GM12878 (cell line): ENCODE measurements at regions of chr3 and their contacts with region 1.

Region 1: GRCh38 chr3:4722103-4722502 is 229.0 kb downstream of the ITPR1 start:
- DNase-seq: no peak
- ATAC-seq: peak; percentile 87
- H3K4me3 ChIP-seq: no peak overlapping the region
- H3K27ac ChIP-seq: no peak overlapping the region
- H3K4me1 ChIP-seq: no peaks in the 10 kb centered on the region
- H3K27me3 ChIP-seq: no peaks in the 10 kb centered on the region
- CTCF ChIP-seq: peak; percentile 30 to 56 (median 47); a peak in 5 of 6 replicates
- EP300 ChIP-seq: no peak
- POLR2A ChIP-seq: no peak
- RAD21 ChIP-seq: peak; percentile 85

Region 2: DNA sequence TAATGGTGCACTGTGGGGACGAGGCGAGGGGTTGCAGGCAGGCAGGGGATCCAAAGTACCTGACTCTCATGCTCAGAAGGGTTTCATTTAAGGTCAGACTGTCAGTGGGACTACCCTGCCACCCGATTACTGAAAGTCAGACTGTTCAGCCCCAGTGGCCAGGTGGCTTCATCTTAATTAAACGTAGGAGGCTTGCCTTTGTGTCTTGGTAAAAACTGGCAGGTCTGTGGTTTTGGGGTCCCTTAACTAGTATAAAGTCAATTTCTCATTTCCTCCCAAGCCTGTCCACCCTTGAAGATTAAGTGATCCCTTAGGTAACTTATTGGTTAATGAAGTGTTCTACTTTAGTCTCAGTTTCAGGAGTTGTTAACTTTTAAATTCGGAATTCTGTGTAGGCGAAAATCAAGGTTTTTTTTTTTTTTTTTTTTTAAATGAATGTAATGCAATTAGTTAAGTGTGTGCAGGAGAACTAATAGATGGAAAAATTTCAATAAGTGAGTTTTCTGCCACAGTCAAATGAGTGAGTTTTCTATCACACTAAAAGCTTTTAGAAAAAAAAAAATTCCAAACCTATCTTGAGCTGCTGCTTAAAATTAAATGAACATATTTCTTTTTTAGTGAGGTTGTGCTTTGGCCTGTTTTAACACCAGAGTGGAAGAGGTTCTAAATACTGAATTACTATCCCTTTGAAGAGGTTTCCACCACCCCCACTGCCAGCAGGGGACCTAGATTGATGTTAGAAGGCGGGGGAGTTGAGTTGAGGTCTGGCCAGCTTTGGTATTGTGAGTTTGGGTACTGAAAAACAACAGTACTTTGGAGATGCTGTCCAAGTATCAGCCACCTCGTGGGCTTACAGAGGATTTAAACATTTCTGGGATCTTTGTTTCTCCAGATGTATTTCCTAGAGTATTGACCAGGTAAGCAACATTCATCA is 213.8 kb before region 1 on chr3:
- CTCF ChIA-PET with region 1: no interaction called
- POLR2A ChIA-PET with region 1: no interaction called
- RAD21 ChIA-PET with region 1: no interaction called
- SMC1A ChIA-PET with region 1: no interaction called
- in situ Hi-C with region 1: no loop called
- intact Hi-C with region 1: no loop called
- DNase-seq: peak; percentile 95
- ATAC-seq: peak; percentile 85
- H3K4me3 ChIP-seq: peak overlapping the region; percentile 37
- H3K27ac ChIP-seq: peak overlapping the region; percentile 60
- H3K4me1 ChIP-seq: peaks cover 48% of the 10 kb centered on the region
- H3K27me3 ChIP-seq: no peaks in the 10 kb centered on the region
- CTCF ChIP-seq: no peak
- EP300 ChIP-seq: peak; percentile 94 to 96
- POLR2A ChIP-seq: no peak
- RAD21 ChIP-seq: no peak

Region 3: GRCh38 chr3:4687167-4687566 is 34.9 kb before region 1 on chr3:
- CTCF ChIA-PET with region 1: no interaction called
- POLR2A ChIA-PET with region 1: no interaction called
- RAD21 ChIA-PET with region 1: no interaction called
- SMC1A ChIA-PET with region 1: no interaction called
- in situ Hi-C with region 1: no loop called
- intact Hi-C with region 1: no loop called
- DNase-seq: no peak
- ATAC-seq: no peak
- H3K4me3 ChIP-seq: no peak overlapping the region
- H3K27ac ChIP-seq: no peak overlapping the region
- H3K4me1 ChIP-seq: no peaks in the 10 kb centered on the region
- H3K27me3 ChIP-seq: no peaks in the 10 kb centered on the region
- CTCF ChIP-seq: no peak
- EP300 ChIP-seq: no peak
- POLR2A ChIP-seq: no peak
- RAD21 ChIP-seq: no peak

Region 4: DNA sequence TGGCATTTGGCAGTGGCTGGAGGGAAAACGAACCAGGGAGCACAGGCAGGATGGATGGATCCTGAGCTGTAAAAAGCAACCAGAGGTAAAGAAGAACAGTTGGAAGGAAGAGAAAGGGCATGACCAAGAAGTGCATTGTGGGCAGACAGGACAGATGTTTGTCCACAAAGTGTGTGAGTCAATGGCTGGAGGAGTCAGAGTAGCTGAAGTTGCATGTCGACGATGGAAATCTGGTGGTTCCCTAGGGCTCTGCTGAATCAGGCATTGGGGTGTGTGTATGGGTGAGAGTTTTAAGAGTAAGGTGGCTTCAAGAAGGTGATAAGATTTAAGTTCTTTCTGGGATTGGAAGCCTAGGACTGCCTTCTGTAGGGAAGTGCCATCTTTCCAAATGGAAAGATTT is 43.1 kb after region 1 on chr3:
- CTCF ChIA-PET with region 1: interaction called, 5 read pairs
- POLR2A ChIA-PET with region 1: no interaction called
- RAD21 ChIA-PET with region 1: interaction called, 264 read pairs
- SMC1A ChIA-PET with region 1: interaction called, 429 read pairs
- in situ Hi-C with region 1: no loop called
- intact Hi-C with region 1: no loop called
- DNase-seq: no peak
- ATAC-seq: no peak
- H3K4me3 ChIP-seq: no peak overlapping the region
- H3K27ac ChIP-seq: no peak overlapping the region
- H3K4me1 ChIP-seq: no peaks in the 10 kb centered on the region
- H3K27me3 ChIP-seq: no peaks in the 10 kb centered on the region
- CTCF ChIP-seq: no peak
- EP300 ChIP-seq: no peak
- POLR2A ChIP-seq: no peak
- RAD21 ChIP-seq: no peak

Region 5: GRCh38 chr3:4807381-4808280 is 85.5 kb after region 1 on chr3:
- CTCF ChIA-PET with region 1: interaction called, 24 read pairs
- POLR2A ChIA-PET with region 1: no interaction called
- RAD21 ChIA-PET with region 1: interaction called, 4 read pairs
- SMC1A ChIA-PET with region 1: interaction called, 4 read pairs
- in situ Hi-C with region 1: no loop called
- intact Hi-C with region 1: no loop called
- DNase-seq: no peak
- ATAC-seq: no peak
- H3K4me3 ChIP-seq: no peak overlapping the region
- H3K27ac ChIP-seq: no peak overlapping the region
- H3K4me1 ChIP-seq: no peaks in the 10 kb centered on the region
- H3K27me3 ChIP-seq: no peaks in the 10 kb centered on the region
- CTCF ChIP-seq: no peak
- EP300 ChIP-seq: no peak
- POLR2A ChIP-seq: no peak
- RAD21 ChIP-seq: no peak

Region 6: DNA sequence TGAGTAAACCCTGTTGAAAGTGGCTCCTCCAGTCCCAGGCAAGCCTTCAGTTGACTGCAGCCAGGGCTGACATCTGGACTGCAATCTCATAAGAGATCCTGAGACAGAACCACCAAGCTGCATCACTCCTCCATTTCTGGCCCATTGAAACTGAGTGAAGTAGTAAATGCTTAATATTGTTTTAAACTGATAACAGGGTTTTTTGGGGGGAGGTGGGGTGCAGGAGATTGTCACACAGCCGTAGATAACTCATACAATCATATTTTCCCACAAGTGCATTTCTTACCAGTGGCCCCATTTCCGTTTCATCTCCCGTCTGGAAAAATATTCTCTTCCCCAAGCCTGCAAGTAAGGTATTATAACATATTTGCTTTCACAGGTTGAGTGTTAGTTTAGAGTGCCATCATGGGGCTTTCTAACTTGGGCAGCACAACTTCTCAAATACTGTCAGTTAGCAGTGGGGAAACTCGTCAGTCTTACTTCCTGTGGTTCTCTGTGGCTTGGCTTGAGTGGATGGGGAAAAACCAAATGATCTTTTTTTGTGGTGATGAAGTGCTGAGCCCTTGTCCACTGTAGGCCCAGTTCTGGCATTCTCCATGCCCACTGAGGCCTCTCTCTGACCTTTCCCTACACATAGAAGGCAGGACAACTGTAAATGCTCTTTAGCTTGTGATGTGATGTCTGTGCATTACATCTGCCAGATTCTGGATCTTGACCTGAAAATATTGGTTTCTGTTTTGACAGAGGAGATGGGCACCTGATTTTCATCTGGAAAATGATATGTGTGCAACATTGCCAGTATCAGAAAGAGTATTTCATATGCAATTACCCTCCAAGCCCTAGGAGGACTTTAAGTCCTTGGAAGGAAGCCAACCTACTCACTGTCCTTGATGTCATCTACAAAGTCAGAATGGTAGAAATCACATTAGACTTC is 167.1 kb after region 1 on chr3:
- CTCF ChIA-PET with region 1: interaction called, 11 read pairs
- POLR2A ChIA-PET with region 1: interaction called, 4 read pairs
- RAD21 ChIA-PET with region 1: interaction called, 4 read pairs
- SMC1A ChIA-PET with region 1: interaction called, 18 read pairs
- in situ Hi-C with region 1: no loop called
- intact Hi-C with region 1: no loop called
- DNase-seq: peak; percentile 71
- ATAC-seq: peak; percentile 96
- H3K4me3 ChIP-seq: no peak overlapping the region; the same call in 1 of the 2 replicates
- H3K27ac ChIP-seq: peak overlapping the region; percentile 69
- H3K4me1 ChIP-seq: peaks cover 12% of the 10 kb centered on the region
- H3K27me3 ChIP-seq: no peaks in the 10 kb centered on the region
- CTCF ChIP-seq: peak in 1 of 3 experiments; percentile 45; a peak in 3 of 6 replicates
- EP300 ChIP-seq: peak; percentile 51 to 71; a peak in 3 of 4 replicates
- POLR2A ChIP-seq: no peak
- RAD21 ChIP-seq: peak; percentile 74

Region 7: GRCh38 chr3:5026331-5027218 is 304.5 kb after region 1 on chr3:
- CTCF ChIA-PET with region 1: interaction called, 20 read pairs
- POLR2A ChIA-PET with region 1: interaction called, 4 read pairs
- RAD21 ChIA-PET with region 1: interaction called, 12 read pairs
- SMC1A ChIA-PET with region 1: interaction called, 11 read pairs
- in situ Hi-C with region 1: no loop called
- intact Hi-C with region 1: no loop called
- DNase-seq: no peak
- ATAC-seq: peak; percentile 83
- H3K4me3 ChIP-seq: peak overlapping the region; percentile 61; the same call in 1 of the 2 replicates
- H3K27ac ChIP-seq: peak overlapping the region; percentile 68
- H3K4me1 ChIP-seq: peaks cover 31% of the 10 kb centered on the region
- H3K27me3 ChIP-seq: no peaks in the 10 kb centered on the region
- CTCF ChIP-seq: peak; percentile 63 to 72 (median 71)
- EP300 ChIP-seq: no peak; a peak in 1 of 4 replicates
- POLR2A ChIP-seq: 0 out of 2 replicates have a peak, but pooled peaks have one; percentile 31
- RAD21 ChIP-seq: peak; percentile 86

Region 8: GRCh38 chr3:5063724-5064123 is 341.6 kb after region 1 on chr3:
- CTCF ChIA-PET with region 1: interaction called, 53 read pairs
- POLR2A ChIA-PET with region 1: interaction called, 7 read pairs
- RAD21 ChIA-PET with region 1: interaction called, 148 read pairs
- SMC1A ChIA-PET with region 1: interaction called, 203 read pairs
- in situ Hi-C with region 1: loop called (anchors 5 kb)
- intact Hi-C with region 1: no loop called
- DNase-seq: no peak
- ATAC-seq: no peak
- H3K4me3 ChIP-seq: no peak overlapping the region
- H3K27ac ChIP-seq: no peak overlapping the region
- H3K4me1 ChIP-seq: no peaks in the 10 kb centered on the region
- H3K27me3 ChIP-seq: no peaks in the 10 kb centered on the region; a peak in 2 of 4 replicates
- CTCF ChIP-seq: no peak
- EP300 ChIP-seq: no peak
- POLR2A ChIP-seq: no peak
- RAD21 ChIP-seq: no peak